ENCODE measurements at regions of chr9 and their contacts with region 1.

Region 1: GRCh38 chr9:129413537-129414376 is 207.1 kb downstream of the C9orf50 start:
- DNase-seq: peak; percentile 93
- ATAC-seq: peak; percentile 85
- H3K4me3 ChIP-seq: peak overlapping the region; percentile 64
- H3K27ac ChIP-seq: peak overlapping the region; percentile 93
- H3K4me1 ChIP-seq: peaks cover 18% of the 10 kb centered on the region
- H3K27me3 ChIP-seq: no peaks in the 10 kb centered on the region
- CTCF ChIP-seq: no peak

Region 2: DNA sequence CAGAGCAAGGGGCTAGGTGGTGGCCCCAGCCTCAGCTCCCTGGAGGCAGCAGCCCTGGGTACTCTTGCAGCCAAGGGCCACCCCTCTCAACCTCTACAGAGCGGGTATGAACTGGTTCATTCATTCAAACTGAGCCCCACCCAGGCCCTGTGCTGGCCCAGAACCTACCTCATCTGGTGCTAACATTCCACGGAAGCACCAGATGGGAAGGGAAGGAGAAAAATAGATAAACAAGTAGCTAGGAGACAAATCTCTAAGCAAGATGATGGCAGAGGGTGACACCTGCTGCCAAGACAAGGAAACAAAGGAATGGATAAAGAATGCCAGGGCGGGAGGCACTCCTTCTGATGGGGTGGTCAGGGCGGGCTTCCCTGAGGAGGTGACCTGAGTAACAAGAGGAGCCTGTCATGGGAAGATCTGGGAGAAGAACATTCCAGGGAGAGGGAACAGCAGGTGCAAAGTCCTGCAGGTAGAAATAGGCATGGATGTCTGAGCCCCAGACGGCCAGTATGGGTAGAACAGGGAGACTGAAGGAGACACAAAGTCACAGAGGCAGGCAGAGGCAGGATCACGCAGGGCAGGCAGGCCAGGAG is 1503.0 kb before region 1 on chr9:
- CTCF ChIA-PET with region 1: no interaction called
- POLR2A ChIA-PET with region 1: interaction called, 12 read pairs
- intact Hi-C with region 1: no loop called
- DNase-seq: no peak
- ATAC-seq: peak; percentile 17; the same call in 1 of the 2 replicates
- H3K4me3 ChIP-seq: no peak overlapping the region
- H3K27ac ChIP-seq: no peak overlapping the region
- H3K4me1 ChIP-seq: peaks cover 6% of the 10 kb centered on the region; the same call in 1 of the 2 replicates
- H3K27me3 ChIP-seq: no peaks in the 10 kb centered on the region
- CTCF ChIP-seq: peak; percentile 41; the same call in 1 of the 2 replicates

Region 3: DNA sequence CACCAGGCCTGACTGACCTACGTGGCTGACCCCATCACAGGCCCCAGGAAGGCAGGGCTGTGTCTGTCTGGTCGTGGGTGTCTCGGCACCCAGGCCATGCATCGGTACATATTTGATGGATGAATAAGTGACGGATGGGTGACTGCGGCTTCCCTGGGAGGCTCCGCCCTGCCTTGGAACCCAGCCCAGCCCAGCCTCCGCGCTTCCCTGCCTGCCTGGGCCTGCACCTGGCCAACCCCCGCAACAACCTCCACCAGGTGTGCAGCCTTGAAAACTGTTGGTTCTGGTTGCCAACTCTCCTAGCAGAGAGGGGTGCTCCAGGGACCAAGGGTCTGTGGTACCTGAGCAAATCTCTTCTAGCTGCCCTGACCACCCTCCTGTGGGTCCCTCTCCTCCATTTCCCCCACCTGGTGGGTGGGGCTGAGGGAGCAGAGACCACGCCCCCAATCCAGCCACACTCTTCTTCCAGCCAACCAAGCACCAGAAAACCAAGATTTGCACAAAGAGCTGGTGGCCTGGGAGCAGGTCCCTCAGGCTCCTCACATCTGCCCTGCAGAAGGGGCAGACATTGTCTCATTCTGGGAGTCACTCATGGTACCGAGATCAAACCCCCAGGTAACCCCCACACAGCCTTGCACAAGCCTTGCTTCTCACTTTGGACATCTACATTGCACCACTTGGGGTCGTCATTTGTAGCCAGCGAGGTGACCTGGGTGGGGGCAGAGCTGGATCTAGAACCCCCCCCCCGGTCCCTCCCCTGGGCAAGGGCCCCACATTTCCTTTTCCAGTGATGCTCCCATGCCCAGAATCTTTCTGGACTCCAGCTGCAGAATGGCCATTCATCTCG is 135.1 kb before region 1 on chr9:
- CTCF ChIA-PET with region 1: no interaction called
- POLR2A ChIA-PET with region 1: no interaction called
- intact Hi-C with region 1: no loop called
- DNase-seq: peak; percentile 81
- ATAC-seq: peak; percentile 90
- H3K4me3 ChIP-seq: no peak overlapping the region
- H3K27ac ChIP-seq: no peak overlapping the region
- H3K4me1 ChIP-seq: peaks cover 10% of the 10 kb centered on the region
- H3K27me3 ChIP-seq: no peaks in the 10 kb centered on the region
- CTCF ChIP-seq: no peak

Region 4: DNA sequence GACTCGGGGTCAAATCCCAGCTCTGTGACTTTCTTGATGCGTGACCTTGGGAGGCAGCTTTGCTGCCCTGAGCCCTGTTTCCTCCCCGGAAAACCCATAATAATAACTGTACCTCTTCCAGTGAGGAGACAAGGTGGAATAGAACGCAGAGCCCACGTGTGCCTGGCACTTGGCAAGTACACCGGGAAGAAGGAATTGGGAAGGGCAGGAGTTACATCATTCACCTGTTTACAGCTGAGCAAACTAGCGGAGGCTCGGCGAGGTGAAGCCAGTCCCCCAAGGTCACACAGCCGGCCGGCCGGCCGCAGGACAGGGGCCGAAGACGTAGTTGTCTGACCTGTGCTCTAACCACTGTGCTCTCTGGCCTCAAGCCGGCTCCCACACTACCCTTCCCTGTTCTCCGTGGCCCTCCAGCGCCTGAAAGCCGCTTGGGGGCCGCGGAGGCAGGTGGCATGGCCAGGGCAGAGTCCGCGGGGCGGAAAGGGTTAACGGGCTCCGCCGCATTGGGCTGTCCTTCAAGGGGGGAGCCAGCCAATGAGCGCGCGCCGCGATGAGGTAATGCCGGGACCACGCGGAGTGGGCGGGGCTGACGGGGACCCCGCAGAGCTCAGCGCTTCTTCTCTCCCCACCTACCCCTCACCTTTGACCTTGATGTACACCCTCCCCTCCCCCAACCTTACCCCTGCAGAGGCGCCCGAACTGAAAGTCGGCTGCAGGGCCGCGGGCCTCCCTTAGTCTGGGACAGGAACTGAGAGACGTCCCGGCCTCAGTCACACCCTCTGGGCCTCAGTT is 82.0 kb after region 1 on chr9:
- CTCF ChIA-PET with region 1: no interaction called
- POLR2A ChIA-PET with region 1: no interaction called
- intact Hi-C with region 1: loop called (anchors 5 kb)
- DNase-seq: peak; percentile 75
- ATAC-seq: peak; percentile 68
- H3K4me3 ChIP-seq: peak overlapping the region; percentile 70
- H3K27ac ChIP-seq: peak overlapping the region; percentile 62
- H3K4me1 ChIP-seq: peaks cover 25% of the 10 kb centered on the region
- H3K27me3 ChIP-seq: no peaks in the 10 kb centered on the region
- CTCF ChIP-seq: no peak

Region 5: GRCh38 chr9:129610473-129611301 is 196.9 kb after region 1 on chr9:
- CTCF ChIA-PET with region 1: no interaction called
- POLR2A ChIA-PET with region 1: no interaction called
- intact Hi-C with region 1: loop called (anchors 5 kb)
- DNase-seq: peak; percentile 67
- ATAC-seq: peak; percentile 45
- H3K4me3 ChIP-seq: peak overlapping the region; percentile 75
- H3K27ac ChIP-seq: no peak overlapping the region
- H3K4me1 ChIP-seq: peaks cover 8% of the 10 kb centered on the region; the same call in 1 of the 2 replicates
- H3K27me3 ChIP-seq: no peaks in the 10 kb centered on the region
- CTCF ChIP-seq: peak; percentile 72

Measured in PC-3 (cell line).